Activated CD4-positive, alpha-beta T cell treated with anti-CD3 and anti-CD28 coated beads, Interleukin-2, amount 10 ng/mL, durations not matched to agents 24 days and 14 days (primary cell): ENCODE measurements at regions of chr4 and their contacts with region 1.

Region 1: GRCh38 chr4:141314627-141315026 is 93.9 kb downstream of the ZNF330 start:
- DNase-seq: no peak
- H3K4me3 Mint-ChIP-seq: no peak overlapping the region
- H3K27ac Mint-ChIP-seq: no peak overlapping the region
- H3K4me1 Mint-ChIP-seq: no peaks in the 10 kb centered on the region
- H3K27me3 Mint-ChIP-seq: peaks cover 17% of the 10 kb centered on the region

Region 2: DNA sequence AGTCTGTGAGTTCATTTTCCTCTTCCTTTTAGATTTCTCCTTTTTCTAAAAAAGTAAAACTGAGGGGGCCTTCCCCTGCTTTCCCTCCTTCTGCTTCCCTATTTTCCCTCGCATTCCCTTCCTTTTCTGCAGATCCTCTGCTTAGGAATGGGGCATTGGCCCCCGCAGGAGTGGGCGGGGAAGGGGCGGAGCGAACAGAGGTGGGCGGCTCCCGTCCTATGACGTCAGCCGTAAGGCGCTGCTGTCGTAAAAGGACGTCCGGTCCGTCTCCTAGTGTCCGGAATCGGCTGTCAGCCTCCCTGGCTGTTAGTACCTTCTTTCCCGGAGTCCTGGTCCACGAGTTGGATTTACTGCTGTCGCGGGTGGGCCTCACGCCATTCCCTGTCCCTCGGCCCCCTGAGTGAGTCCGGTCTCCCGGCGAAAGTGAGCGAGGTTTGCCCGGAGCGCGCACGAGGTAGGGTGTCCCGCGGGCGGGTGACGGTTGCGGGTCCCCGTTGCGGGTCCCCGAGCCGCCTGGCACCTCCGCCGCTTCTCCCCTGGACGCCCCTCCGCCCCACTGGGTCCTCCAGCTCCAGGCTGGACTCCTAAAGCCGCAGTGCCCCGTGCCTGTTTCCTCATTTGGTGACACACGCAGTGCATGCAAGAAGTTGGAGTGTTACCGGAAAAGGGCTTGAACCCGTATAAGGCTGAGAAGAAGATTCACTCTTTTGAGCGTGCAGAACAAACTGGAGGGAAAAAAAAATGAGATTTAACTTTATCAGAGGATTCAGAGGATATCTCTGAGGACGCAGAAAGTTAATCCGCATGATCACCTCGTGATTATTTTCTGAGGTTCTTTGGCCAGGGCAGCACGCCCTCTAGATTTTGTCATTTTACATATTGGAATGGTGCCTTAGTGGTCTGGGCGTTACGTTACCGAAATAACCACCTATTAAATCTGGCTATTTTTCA is 93.7 kb before region 1 on chr4 and contains the start of gene ZNF330:
- intact Hi-C with region 1: no loop called
- DNase-seq: peak; percentile 97
- H3K4me3 Mint-ChIP-seq: peak within 1 kb of the TSS; percentile 95
- H3K27ac Mint-ChIP-seq: peak within 1 kb of the TSS; percentile 98
- H3K4me1 Mint-ChIP-seq: peaks cover 37% of the 10 kb centered on the region
- H3K27me3 Mint-ChIP-seq: peaks cover 4% of the 10 kb centered on the region
- total RNA-seq, gene ZNF330: 60.2 and 64.6 TPM in 2 replicates

Region 3: GRCh38 chr4:141301216-141301615 is 13.4 kb before region 1 on chr4:
- intact Hi-C with region 1: no loop called
- DNase-seq: no peak
- H3K4me3 Mint-ChIP-seq: no peak overlapping the region
- H3K27ac Mint-ChIP-seq: no peak overlapping the region
- H3K4me1 Mint-ChIP-seq: no peaks in the 10 kb centered on the region
- H3K27me3 Mint-ChIP-seq: peaks cover 4% of the 10 kb centered on the region

Region 4: GRCh38 chr4:141971869-141972268 is 657.2 kb after region 1 on chr4:
- intact Hi-C with region 1: loop called (anchors 5 kb)
- DNase-seq: no peak
- H3K4me3 Mint-ChIP-seq: no peak overlapping the region
- H3K27ac Mint-ChIP-seq: no peak overlapping the region
- H3K4me1 Mint-ChIP-seq: no peaks in the 10 kb centered on the region
- H3K27me3 Mint-ChIP-seq: no peaks in the 10 kb centered on the region